Endothelial cell of umbilical vein (primary cell): ENCODE measurements at regions of chr7 and their contacts with region 1.

Region 1: DNA sequence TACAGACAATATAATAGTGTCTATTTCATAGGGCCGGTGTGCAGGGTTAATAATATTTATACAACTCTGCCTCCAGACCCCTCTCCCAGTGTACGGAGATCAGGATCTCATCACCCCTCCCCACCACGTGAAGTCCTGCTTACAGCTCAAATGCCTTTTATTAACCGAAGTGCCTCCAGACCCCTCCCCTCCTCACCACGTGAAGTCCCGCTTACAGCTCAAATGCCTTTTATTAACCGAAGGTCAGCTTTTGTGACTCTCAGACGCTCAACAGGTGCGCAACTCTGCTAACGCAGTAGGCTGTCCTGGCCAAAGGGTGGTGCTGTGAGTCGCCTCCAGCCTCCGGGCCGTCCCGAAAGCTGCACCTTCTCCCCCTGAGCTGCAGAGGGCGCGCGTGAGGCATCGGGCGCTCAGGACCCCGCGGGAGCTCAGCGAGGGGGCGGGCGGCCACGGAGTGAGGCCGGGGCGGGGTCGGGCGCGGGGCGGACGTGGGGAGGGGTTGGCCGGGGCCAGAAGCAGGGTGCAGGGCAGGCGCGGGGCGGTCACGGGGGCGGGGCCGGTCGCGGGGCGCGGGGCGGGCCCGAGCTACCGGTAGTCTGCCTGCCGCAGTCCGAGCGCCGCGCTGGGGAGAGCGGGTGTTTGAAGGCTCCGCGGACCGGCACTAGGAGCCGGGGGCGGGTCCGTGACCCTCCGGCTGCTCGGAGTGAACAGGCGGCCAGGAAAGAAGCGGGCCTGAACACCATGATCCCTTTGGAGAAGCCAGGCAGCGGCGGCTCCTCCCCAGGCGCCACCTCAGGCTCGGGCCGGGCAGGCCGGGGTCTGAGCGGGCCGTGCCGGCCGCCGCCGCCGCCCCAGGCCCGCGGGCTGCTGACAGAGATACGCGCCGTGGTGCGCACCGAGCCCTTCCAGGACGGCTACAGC is at the start of gene STK17A:
- DNase-seq: peak; percentile 92
- H3K4me3 ChIP-seq: peak within 1 kb of the TSS; percentile 74 to 89 (median 76)
- H3K27ac ChIP-seq: peak within 1 kb of the TSS; percentile 49
- H3K4me1 ChIP-seq: peaks cover 33% of the 10 kb centered on the region
- H3K27me3 ChIP-seq: peaks cover 2 to 12% of the 10 kb centered on the region in 2 experiments
- CTCF ChIP-seq: peak; percentile 97 to 100
- POLR2A ChIP-seq: peak; percentile 96
- total RNA-seq, gene STK17A: 53.9 and 58.8 TPM in 2 replicates

Region 2: GRCh38 chr7:42931834-42932651 is 650.7 kb before region 1 on chr7 and contains the starts of genes MRPL32 and PSMA2:
- CTCF ChIA-PET with region 1: interaction called, 9 read pairs
- POLR2A ChIA-PET with region 1: interaction called, 6 read pairs
- dilution Hi-C with region 1: no loop called
- intact Hi-C with region 1: loop called (anchors 10 kb)
- DNase-seq: peak; percentile 99
- H3K4me3 ChIP-seq: peak within 1 kb of the TSS; percentile 54 to 95 (median 91)
- H3K27ac ChIP-seq: peak within 1 kb of the TSS; percentile 64
- H3K4me1 ChIP-seq: peaks cover 29% of the 10 kb centered on the region
- H3K27me3 ChIP-seq: no peaks in the 10 kb centered on the region
- CTCF ChIP-seq: no peak
- POLR2A ChIP-seq: peak; percentile 74
- total RNA-seq, gene MRPL32: 56.6 and 62.2 TPM in 2 replicates
- total RNA-seq, gene PSMA2: 110 and 118 TPM in 2 replicates

Region 3: GRCh38 chr7:43377196-43377960 is 205.4 kb before region 1 on chr7:
- CTCF ChIA-PET with region 1: no interaction called
- POLR2A ChIA-PET with region 1: no interaction called
- dilution Hi-C with region 1: no loop called
- intact Hi-C with region 1: no loop called
- DNase-seq: no peak
- H3K4me3 ChIP-seq: no peak overlapping the region
- H3K27ac ChIP-seq: no peak overlapping the region
- H3K4me1 ChIP-seq: no peaks in the 10 kb centered on the region
- H3K27me3 ChIP-seq: no peaks in the 10 kb centered on the region
- CTCF ChIP-seq: no peak
- POLR2A ChIP-seq: no peak

Region 4: GRCh38 chr7:43572516-43573049 is 10.2 kb before region 1 on chr7:
- CTCF ChIA-PET with region 1: interaction called, 65 read pairs
- POLR2A ChIA-PET with region 1: interaction called, 17 read pairs
- dilution Hi-C with region 1: no loop called
- intact Hi-C with region 1: no loop called
- DNase-seq: peak; percentile 80
- H3K4me3 ChIP-seq: no peak overlapping the region
- H3K27ac ChIP-seq: peak overlapping the region; percentile 79
- H3K4me1 ChIP-seq: peaks cover 7% of the 10 kb centered on the region
- H3K27me3 ChIP-seq: no peaks in the 10 kb centered on the region
- CTCF ChIP-seq: no peak
- POLR2A ChIP-seq: peak; percentile 13

Region 5: DNA sequence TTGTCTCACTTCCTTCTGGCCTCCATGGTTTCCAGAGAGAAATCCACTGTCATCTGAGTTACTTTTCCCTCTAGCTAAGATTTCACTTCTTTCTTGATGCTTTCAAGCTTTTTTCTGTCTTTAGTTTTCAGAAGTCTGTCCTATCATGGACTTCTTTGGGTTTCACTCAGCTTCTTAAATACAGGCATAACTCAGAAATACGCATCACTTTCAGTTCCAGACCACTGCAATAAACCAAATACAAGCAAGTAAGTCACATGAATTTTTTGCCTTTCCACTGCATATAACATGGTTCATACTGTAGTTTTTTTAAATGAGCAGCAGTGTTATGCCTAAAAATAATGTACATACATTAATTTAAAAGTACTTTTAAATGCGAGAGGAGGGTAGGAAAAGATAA is 48.8 kb after region 1 on chr7:
- CTCF ChIA-PET with region 1: interaction called, 82 read pairs
- POLR2A ChIA-PET with region 1: interaction called, 3 read pairs
- dilution Hi-C with region 1: no loop called
- intact Hi-C with region 1: no loop called
- DNase-seq: no peak
- H3K4me3 ChIP-seq: no peak overlapping the region
- H3K27ac ChIP-seq: no peak overlapping the region
- H3K4me1 ChIP-seq: no peaks in the 10 kb centered on the region
- H3K27me3 ChIP-seq: no peaks in the 10 kb centered on the region
- CTCF ChIP-seq: no peak
- POLR2A ChIP-seq: no peak

Region 6: GRCh38 chr7:43693687-43694398 is 111.1 kb after region 1 on chr7:
- CTCF ChIA-PET with region 1: interaction called, 603 read pairs
- POLR2A ChIA-PET with region 1: interaction called, 73 read pairs
- dilution Hi-C with region 1: no loop called
- intact Hi-C with region 1: loop called (anchors 1 kb)
- DNase-seq: peak; percentile 73
- H3K4me3 ChIP-seq: no peak overlapping the region
- H3K27ac ChIP-seq: peak overlapping the region; percentile 59
- H3K4me1 ChIP-seq: peaks cover 16% of the 10 kb centered on the region
- H3K27me3 ChIP-seq: no peaks in the 10 kb centered on the region
- CTCF ChIP-seq: no peak
- POLR2A ChIP-seq: no peak

Region 7: GRCh38 chr7:43729214-43729923 is 146.6 kb after region 1 on chr7 and contains the start of gene COA1:
- CTCF ChIA-PET with region 1: interaction called, 23 read pairs
- POLR2A ChIA-PET with region 1: interaction called, 8 read pairs
- dilution Hi-C with region 1: loop called (anchors 25 kb)
- intact Hi-C with region 1: loop called (anchors 2 kb)
- DNase-seq: peak; percentile 93
- H3K4me3 ChIP-seq: peak within 1 kb of the TSS; percentile 13 to 66 (median 58)
- H3K27ac ChIP-seq: peak within 1 kb of the TSS; percentile 48
- H3K4me1 ChIP-seq: peaks cover 14% of the 10 kb centered on the region
- H3K27me3 ChIP-seq: peaks cover 0 to 3% of the 10 kb centered on the region in 2 experiments
- CTCF ChIP-seq: no peak
- POLR2A ChIP-seq: peak; percentile 86
- total RNA-seq, gene COA1: 55.1 and 58.0 TPM in 2 replicates